Caco-2 (cell line): ENCODE measurements at regions of chr4 and their contacts with region 1.

Region 1: DNA sequence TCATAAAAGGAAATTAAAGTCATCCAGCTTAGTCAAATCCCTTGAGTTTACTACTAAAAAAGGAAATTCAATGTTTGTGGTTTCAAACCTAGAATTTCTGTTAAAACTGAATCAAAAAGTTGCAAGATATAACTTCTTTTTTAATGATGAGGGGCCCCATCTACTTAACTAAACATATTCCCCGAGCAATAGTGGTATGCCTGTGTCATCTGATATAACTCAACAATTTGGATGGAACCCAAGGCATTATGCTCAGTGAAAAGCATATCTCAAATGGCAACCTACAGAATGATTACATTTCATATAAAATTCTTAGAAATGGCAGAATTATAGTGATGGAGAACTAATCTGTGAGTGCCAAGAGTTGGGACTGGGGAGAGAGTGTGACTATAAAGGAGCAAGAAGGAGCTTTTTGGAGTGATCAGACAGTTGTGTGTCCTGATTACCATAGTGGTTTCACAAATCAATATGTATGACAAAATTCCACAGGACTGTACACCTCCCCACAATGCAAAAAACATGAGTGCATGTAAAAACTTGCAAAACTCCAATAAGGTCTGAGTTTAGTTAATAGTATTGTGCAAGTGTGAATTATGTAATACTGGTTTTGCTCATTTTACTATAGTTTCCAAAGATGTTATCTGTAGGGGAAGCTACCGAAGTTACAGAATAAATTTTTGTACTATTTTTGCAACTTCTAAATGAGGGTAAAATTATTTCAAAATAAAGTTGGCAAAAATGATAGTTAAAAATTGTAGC is 323.2 kb downstream of the ARHGAP24 start:
- DNase-seq: no peak
- H3K4me3 ChIP-seq: no peak overlapping the region
- H3K4me3 Mint-ChIP-seq: no peak overlapping the region
- H3K27ac Mint-ChIP-seq: no peak overlapping the region
- H3K4me1 ChIP-seq: no peaks in the 10 kb centered on the region
- H3K4me1 Mint-ChIP-seq: no peaks in the 10 kb centered on the region
- H3K27me3 ChIP-seq: no peaks in the 10 kb centered on the region
- H3K27me3 Mint-ChIP-seq: peaks cover 4% of the 10 kb centered on the region
- CTCF ChIP-seq: no peak

Region 2: GRCh38 chr4:85826060-85826678 is 28.0 kb after region 1 on chr4:
- CTCF ChIA-PET with region 1: interaction called, 7 read pairs
- POLR2A ChIA-PET with region 1: no interaction called
- intact Hi-C with region 1: loop called (anchors 2 kb)
- DNase-seq: peak in 1 of 2 experiments; percentile 40
- H3K4me3 ChIP-seq: no peak overlapping the region
- H3K4me3 Mint-ChIP-seq: no peak overlapping the region
- H3K27ac Mint-ChIP-seq: peak overlapping the region; percentile 13
- H3K4me1 ChIP-seq: peaks cover 12% of the 10 kb centered on the region; the same call in 1 of the 2 replicates
- H3K4me1 Mint-ChIP-seq: peaks cover 15% of the 10 kb centered on the region
- H3K27me3 ChIP-seq: no peaks in the 10 kb centered on the region
- H3K27me3 Mint-ChIP-seq: no peaks in the 10 kb centered on the region
- CTCF ChIP-seq: peak; percentile 14 to 41

Region 3: DNA sequence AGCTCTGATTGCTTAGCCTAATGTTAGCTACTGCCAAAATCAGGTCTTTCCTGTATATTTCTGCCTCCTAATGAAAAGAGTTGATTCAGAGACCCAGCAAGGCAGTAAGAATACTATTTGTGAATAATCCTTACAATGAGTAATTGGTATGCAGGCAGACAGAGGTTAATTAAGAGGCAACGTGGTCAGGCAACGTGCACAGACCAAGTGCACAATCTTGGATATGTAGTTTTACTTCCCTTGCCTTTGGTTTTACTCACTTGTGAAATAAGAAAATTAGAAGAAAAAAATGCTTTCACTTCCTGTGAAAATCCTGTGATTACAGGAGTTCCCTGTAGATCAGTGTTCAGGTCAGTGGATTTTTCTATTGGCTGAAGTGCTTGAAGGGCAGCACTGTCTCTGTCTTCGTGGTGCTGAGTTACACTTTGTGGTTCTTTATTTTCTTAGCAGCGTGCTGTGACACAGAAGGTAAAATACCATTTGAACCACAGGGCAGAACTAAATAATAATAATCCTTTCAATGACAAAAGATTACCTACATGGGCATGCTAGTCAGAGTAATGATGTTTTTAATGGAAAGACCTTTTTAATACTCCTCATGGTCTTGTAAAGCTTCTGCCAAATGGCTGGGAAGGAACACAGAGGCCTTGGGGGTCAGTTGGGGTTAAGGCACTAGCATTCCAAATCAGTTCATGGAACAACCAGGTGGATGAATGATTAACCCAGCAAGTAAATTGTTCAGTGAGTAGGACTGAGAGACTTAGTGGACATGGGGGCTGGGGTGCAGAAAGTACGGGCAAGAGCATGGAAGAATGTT is 130.8 kb after region 1 on chr4:
- CTCF ChIA-PET with region 1: no interaction called
- POLR2A ChIA-PET with region 1: no interaction called
- intact Hi-C with region 1: loop called (anchors 1 kb)
- DNase-seq: peak; percentile 71 to 74
- H3K4me3 ChIP-seq: 0 out of 2 replicates have a peak overlapping the region, but pooled peaks have one; percentile 6
- H3K4me3 Mint-ChIP-seq: peak overlapping the region; percentile 70
- H3K27ac Mint-ChIP-seq: peak overlapping the region; percentile 84
- H3K4me1 ChIP-seq: peaks cover 26% of the 10 kb centered on the region
- H3K4me1 Mint-ChIP-seq: peaks cover 33% of the 10 kb centered on the region
- H3K27me3 ChIP-seq: no peaks in the 10 kb centered on the region
- H3K27me3 Mint-ChIP-seq: no peaks in the 10 kb centered on the region
- CTCF ChIP-seq: no peak

Region 4: DNA sequence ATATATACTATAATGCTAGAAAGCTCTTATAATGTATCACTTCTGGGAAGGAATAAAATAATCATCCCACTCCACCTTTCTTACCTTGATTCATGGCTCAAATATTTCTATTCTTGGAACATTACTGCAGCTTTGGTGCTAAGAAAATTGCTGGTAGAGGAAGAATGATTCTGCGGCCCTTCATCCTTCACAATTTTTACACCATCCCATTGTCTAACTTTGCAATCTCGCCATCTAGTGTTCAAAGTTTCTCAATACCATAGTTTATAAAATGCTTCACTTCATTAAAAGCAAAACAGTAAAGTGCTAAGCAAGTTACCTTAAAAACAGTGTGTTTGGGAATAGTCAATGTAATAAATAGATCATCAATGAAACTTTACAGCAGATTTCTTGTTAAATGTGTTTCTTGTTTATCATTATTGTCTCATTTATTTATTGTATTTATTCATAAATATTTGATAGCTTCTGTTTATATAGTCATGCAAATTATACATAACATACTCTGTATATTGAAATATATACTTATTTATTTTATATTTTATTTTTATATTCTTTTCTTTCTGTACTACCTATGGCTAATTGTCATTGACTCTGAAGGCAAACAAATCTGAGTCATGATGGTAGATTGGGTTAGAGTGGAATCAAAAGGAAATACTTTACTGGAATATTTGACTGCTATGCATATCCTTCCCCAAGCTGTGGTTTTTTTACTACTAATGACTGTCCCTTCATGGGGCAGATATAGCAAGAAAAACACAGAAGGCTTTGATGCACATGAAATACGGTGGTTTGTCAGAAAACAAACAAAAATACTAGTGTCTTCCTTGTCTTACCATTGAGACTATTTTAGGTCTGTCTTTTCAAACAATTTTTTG is 171.0 kb after region 1 on chr4:
- CTCF ChIA-PET with region 1: interaction called, 26 read pairs
- POLR2A ChIA-PET with region 1: no interaction called
- intact Hi-C with region 1: loop called (anchors 1 kb)
- DNase-seq: peak in 1 of 2 experiments; percentile 24
- H3K4me3 ChIP-seq: no peak overlapping the region
- H3K4me3 Mint-ChIP-seq: no peak overlapping the region
- H3K27ac Mint-ChIP-seq: no peak overlapping the region
- H3K4me1 ChIP-seq: no peaks in the 10 kb centered on the region
- H3K4me1 Mint-ChIP-seq: no peaks in the 10 kb centered on the region
- H3K27me3 ChIP-seq: no peaks in the 10 kb centered on the region
- H3K27me3 Mint-ChIP-seq: no peaks in the 10 kb centered on the region
- CTCF ChIP-seq: peak; percentile 44 to 49

Region 5: GRCh38 chr4:86043755-86044592 is 245.8 kb after region 1 on chr4:
- CTCF ChIA-PET with region 1: interaction called, 8 read pairs
- POLR2A ChIA-PET with region 1: no interaction called
- intact Hi-C with region 1: loop called (anchors 1 kb)
- DNase-seq: peak in 1 of 2 experiments; percentile 49
- H3K4me3 ChIP-seq: no peak overlapping the region
- H3K4me3 Mint-ChIP-seq: no peak overlapping the region
- H3K27ac Mint-ChIP-seq: no peak overlapping the region
- H3K4me1 ChIP-seq: 0 out of 2 replicates have a peak, but pooled peaks cover 2% of the 10 kb centered on the region
- H3K4me1 Mint-ChIP-seq: no peaks in the 10 kb centered on the region
- H3K27me3 ChIP-seq: no peaks in the 10 kb centered on the region
- H3K27me3 Mint-ChIP-seq: peaks cover 11% of the 10 kb centered on the region
- CTCF ChIP-seq: peak; percentile 49 to 55